GM12878 (cell line): ENCODE measurements at regions of chr17 and their contacts with region 1.

Region 1: GRCh38 chr17:75632863-75633485 is at the start of gene SMIM5:
- DNase-seq: no peak
- ATAC-seq: peak; percentile 97
- H3K4me3 ChIP-seq: no peak within 1 kb of the TSS
- H3K27ac ChIP-seq: no peak within 1 kb of the TSS
- H3K4me1 ChIP-seq: peaks cover 8% of the 10 kb centered on the region
- H3K27me3 ChIP-seq: no peaks in the 10 kb centered on the region
- CTCF ChIP-seq: peak; percentile 87 to 95 (median 92)
- EP300 ChIP-seq: no peak
- POLR2A ChIP-seq: no peak
- RAD21 ChIP-seq: peak; percentile 69
- polyA plus RNA-seq, gene SMIM5: not detected

Region 2: DNA sequence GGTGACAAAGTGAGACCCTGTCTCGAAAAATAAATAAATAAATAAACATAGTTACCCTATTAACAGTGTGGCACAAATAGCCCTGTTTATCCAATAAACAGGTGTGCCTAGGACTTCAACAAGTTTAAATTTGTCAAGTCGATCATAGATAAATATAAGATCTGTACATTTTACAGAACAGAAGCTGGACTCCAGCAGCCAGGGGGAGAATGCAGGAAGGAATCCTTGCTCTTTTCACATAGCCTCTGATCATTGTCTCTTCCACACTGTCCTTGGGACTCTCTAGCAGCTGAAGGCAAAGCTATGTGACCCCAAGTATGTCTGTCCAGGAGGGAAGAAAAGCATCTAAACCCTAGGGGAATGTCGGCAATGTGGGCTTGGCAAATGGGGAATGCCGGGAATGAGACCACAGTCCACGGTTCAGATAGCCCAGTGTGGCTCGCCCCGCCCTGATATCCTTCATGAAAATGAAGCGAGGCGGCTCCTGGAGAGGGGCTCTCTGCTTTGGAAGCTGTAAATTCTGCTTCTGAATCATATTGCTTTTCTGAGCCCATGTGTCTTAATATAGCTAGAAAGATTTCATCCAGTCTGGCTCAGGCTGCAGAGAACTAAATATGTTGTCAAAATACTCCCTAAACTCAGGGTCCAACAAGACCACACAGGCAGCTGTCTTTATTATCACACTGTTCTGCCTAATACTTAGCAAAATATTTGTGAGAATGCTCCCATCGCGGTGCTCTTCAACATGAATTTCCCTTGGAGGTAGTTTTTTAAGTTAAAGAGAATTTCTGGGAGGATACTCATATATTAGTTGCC is 202.6 kb before region 1 on chr17:
- CTCF ChIA-PET with region 1: interaction called, 14 read pairs
- POLR2A ChIA-PET with region 1: no interaction called
- RAD21 ChIA-PET with region 1: interaction called, 4 read pairs
- SMC1A ChIA-PET with region 1: no interaction called
- in situ Hi-C with region 1: no loop called
- intact Hi-C with region 1: no loop called
- DNase-seq: no peak
- ATAC-seq: no peak
- H3K4me3 ChIP-seq: no peak overlapping the region
- H3K27ac ChIP-seq: no peak overlapping the region
- H3K4me1 ChIP-seq: peaks cover 9% of the 10 kb centered on the region
- H3K27me3 ChIP-seq: no peaks in the 10 kb centered on the region; a peak in 1 of 4 replicates
- CTCF ChIP-seq: no peak
- EP300 ChIP-seq: no peak
- POLR2A ChIP-seq: no peak
- RAD21 ChIP-seq: no peak

Region 3: GRCh38 chr17:75614006-75614405 is 19.0 kb before region 1 on chr17:
- CTCF ChIA-PET with region 1: interaction called, 24 read pairs
- POLR2A ChIA-PET with region 1: interaction called, 3 read pairs
- RAD21 ChIA-PET with region 1: interaction called, 7 read pairs
- SMC1A ChIA-PET with region 1: no interaction called
- in situ Hi-C with region 1: no loop called
- intact Hi-C with region 1: no loop called
- DNase-seq: no peak
- ATAC-seq: peak; percentile 59
- H3K4me3 ChIP-seq: no peak overlapping the region
- H3K27ac ChIP-seq: no peak overlapping the region
- H3K4me1 ChIP-seq: no peaks in the 10 kb centered on the region
- H3K27me3 ChIP-seq: no peaks in the 10 kb centered on the region
- CTCF ChIP-seq: peak in 2 of 3 experiments; percentile 17 to 38; a peak in 3 of 6 replicates
- EP300 ChIP-seq: no peak
- POLR2A ChIP-seq: no peak
- RAD21 ChIP-seq: peak; percentile 24; the same call in 1 of the 2 replicates

Region 4: GRCh38 chr17:75645889-75646637 is 13.1 kb after region 1 on chr17:
- CTCF ChIA-PET with region 1: interaction called, 349 read pairs
- POLR2A ChIA-PET with region 1: interaction called, 4 read pairs
- RAD21 ChIA-PET with region 1: interaction called, 33 read pairs
- SMC1A ChIA-PET with region 1: interaction called, 32 read pairs
- in situ Hi-C with region 1: no loop called
- intact Hi-C with region 1: no loop called
- DNase-seq: peak; percentile 42
- ATAC-seq: peak; percentile 100
- H3K4me3 ChIP-seq: no peak overlapping the region
- H3K27ac ChIP-seq: peak overlapping the region; percentile 69
- H3K4me1 ChIP-seq: peaks cover 14% of the 10 kb centered on the region
- H3K27me3 ChIP-seq: no peaks in the 10 kb centered on the region
- CTCF ChIP-seq: no peak
- EP300 ChIP-seq: peak in 1 of 2 experiments; percentile 25; a peak in 1 of 4 replicates
- POLR2A ChIP-seq: no peak
- RAD21 ChIP-seq: no peak

Region 5: DNA sequence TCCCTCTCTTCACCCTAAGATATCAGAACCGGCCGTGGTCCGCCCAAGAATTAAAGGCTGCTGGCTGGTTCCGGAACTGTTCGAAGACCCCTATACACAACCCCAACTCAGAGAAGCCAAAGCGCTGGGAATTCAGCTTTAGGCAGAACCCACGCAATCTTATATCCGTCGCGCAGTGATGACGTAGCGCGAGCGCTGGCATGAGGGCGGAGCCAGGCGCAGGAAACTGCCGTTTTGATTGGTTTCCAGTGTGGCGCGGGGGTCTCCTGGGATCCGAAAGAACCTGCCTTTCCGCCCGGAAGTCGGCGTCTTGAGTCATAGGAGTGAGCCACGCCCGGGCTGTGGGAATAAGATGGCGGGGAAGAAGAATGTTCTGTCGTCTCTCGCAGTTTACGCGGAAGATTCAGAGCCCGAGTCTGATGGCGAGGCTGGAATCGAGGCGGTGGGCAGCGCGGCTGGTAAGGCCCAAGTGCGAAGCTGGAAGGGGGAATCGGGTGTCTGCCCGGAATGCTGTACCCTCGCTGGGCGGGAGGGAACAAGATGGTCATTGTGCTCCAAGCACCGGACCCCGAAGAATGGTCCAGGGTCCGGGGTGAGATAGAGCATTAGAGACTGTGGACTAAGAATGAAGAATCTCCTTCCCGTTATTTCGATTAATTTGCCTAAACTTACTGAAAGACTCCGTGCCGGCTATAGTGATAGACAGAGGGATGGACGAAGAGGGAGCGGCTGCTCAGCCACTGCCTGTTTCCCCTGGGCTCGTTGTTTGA is 34.2 kb after region 1 on chr17 and contains the starts of genes RECQL5 and SAP30BP:
- CTCF ChIA-PET with region 1: interaction called, 349 read pairs
- POLR2A ChIA-PET with region 1: interaction called, 4 read pairs
- RAD21 ChIA-PET with region 1: interaction called, 6 read pairs
- SMC1A ChIA-PET with region 1: interaction called, 14 read pairs
- in situ Hi-C with region 1: no loop called
- intact Hi-C with region 1: no loop called
- DNase-seq: peak; percentile 90
- ATAC-seq: peak; percentile 89
- H3K4me3 ChIP-seq: peak within 1 kb of the TSS; percentile 79
- H3K27ac ChIP-seq: peak within 1 kb of the TSS; percentile 81
- H3K4me1 ChIP-seq: peaks cover 23% of the 10 kb centered on the region
- H3K27me3 ChIP-seq: no peaks in the 10 kb centered on the region
- CTCF ChIP-seq: no peak
- EP300 ChIP-seq: peak in 1 of 2 experiments; percentile 24; a peak in 1 of 4 replicates
- POLR2A ChIP-seq: peak; percentile 90
- RAD21 ChIP-seq: no peak
- polyA plus RNA-seq, gene RECQL5: 3.6 to 6.4 TPM
- polyA plus RNA-seq, gene SAP30BP: 149 to 166 TPM

Region 6: GRCh38 chr17:75679706-75680442 is 46.9 kb after region 1 on chr17:
- CTCF ChIA-PET with region 1: interaction called, 72 read pairs
- POLR2A ChIA-PET with region 1: no interaction called
- RAD21 ChIA-PET with region 1: interaction called, 6 read pairs
- SMC1A ChIA-PET with region 1: interaction called, 12 read pairs
- in situ Hi-C with region 1: no loop called
- intact Hi-C with region 1: no loop called
- DNase-seq: no peak
- ATAC-seq: no peak
- H3K4me3 ChIP-seq: no peak overlapping the region
- H3K27ac ChIP-seq: no peak overlapping the region
- H3K4me1 ChIP-seq: peaks cover 3% of the 10 kb centered on the region; the same call in 1 of the 2 replicates
- H3K27me3 ChIP-seq: no peaks in the 10 kb centered on the region
- CTCF ChIP-seq: no peak
- EP300 ChIP-seq: no peak
- POLR2A ChIP-seq: no peak
- RAD21 ChIP-seq: no peak

Region 7: GRCh38 chr17:75738218-75738802 is 105.3 kb after region 1 on chr17:
- CTCF ChIA-PET with region 1: interaction called, 336 read pairs
- POLR2A ChIA-PET with region 1: no interaction called
- RAD21 ChIA-PET with region 1: interaction called, 3 read pairs
- SMC1A ChIA-PET with region 1: no interaction called
- in situ Hi-C with region 1: loop called (anchors 10 kb)
- intact Hi-C with region 1: no loop called
- DNase-seq: no peak
- ATAC-seq: peak; percentile 80
- H3K4me3 ChIP-seq: no peak overlapping the region
- H3K27ac ChIP-seq: no peak overlapping the region
- H3K4me1 ChIP-seq: peaks cover 7% of the 10 kb centered on the region
- H3K27me3 ChIP-seq: no peaks in the 10 kb centered on the region
- CTCF ChIP-seq: no peak
- EP300 ChIP-seq: no peak
- POLR2A ChIP-seq: no peak
- RAD21 ChIP-seq: no peak